ENCODE measurements at regions of chr1 and their contacts with region 1.

Region 1: GRCh38 chr1:234610348-234611152 is 572 bp upstream of the IRF2BP2 start:
- DNase-seq: peak; percentile 89 to 93 (median 91)
- ATAC-seq: peak; percentile 67
- H3K4me3 ChIP-seq: peak overlapping the region; percentile 89
- H3K4me3 Mint-ChIP-seq: peak overlapping the region; percentile 80 to 98 (median 90)
- H3K27ac ChIP-seq: peak overlapping the region; percentile 97
- H3K27ac Mint-ChIP-seq: peak overlapping the region; percentile 97 to 100 (median 99)
- H3K4me1 ChIP-seq: peaks cover 34 to 43% of the 10 kb centered on the region in 2 donors
- H3K4me1 Mint-ChIP-seq: peaks cover 45 to 62% (median 54%) of the 10 kb centered on the region in 7 donors
- H3K27me3 ChIP-seq: no peaks in the 10 kb centered on the region
- H3K27me3 Mint-ChIP-seq: peaks cover 0 to 6% (median 0%) of the 10 kb centered on the region in 5 donors

Region 2: DNA sequence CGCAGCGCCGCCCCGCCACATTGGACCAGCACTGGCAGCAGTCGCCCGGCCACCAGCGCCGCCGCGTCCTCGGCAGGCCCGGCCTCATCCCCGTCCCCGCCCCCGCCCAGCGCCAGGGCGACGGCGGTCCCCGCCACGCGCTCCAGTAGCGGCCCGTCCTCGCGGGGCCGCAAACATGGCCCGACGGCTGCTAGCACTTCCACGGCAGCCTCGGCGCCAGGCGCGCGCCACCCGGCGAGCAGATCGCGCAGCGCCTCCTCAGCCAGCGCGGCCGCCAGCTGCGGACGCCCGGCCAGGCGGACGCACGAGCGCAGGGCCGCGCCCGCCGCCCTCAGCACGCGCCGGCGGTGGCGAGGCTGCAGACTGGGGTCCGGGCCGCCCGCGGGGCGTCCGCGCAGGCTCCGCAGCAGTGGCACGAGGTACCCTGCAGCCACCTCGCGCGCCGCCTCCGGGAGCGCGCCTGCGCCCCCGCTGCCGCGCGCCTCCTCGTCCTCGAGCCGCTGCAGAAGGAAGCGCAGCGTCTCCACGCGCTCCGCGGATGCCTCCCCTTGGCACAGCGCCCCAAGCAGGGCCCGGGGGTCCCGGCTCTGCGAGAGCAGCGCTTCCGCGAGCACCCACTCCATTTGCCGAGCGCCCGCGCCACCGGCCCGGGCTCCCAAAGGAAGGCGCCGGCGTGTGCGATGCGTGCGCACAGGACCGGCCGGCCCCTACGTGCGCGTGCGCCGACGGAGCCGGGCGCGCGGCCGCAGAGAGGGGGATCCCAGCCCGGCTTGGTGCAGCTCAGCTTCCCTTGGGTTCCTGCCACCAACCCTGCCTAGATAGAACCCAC is 131.9 kb before region 1 on chr1 and contains the start of gene TARBP1:
- CTCF ChIA-PET with region 1: no interaction called
- POLR2A ChIA-PET with region 1: interaction called, 22 read pairs
- intact Hi-C with region 1: loop called (anchors 1 kb)
- DNase-seq: peak; percentile 68 to 87 (median 83)
- ATAC-seq: peak; percentile 82
- H3K4me3 ChIP-seq: peak within 1 kb of the TSS; percentile 79
- H3K4me3 Mint-ChIP-seq: peak within 1 kb of the TSS; percentile 82 to 90 (median 90)
- H3K27ac ChIP-seq: peak within 1 kb of the TSS; percentile 75
- H3K27ac Mint-ChIP-seq: peak within 1 kb of the TSS; percentile 73 to 95 (median 85)
- H3K4me1 ChIP-seq: peaks cover 0 to 16% of the 10 kb centered on the region in 2 donors
- H3K4me1 Mint-ChIP-seq: peaks cover 14 to 44% (median 39%) of the 10 kb centered on the region in 7 donors
- H3K27me3 ChIP-seq: no peaks in the 10 kb centered on the region
- H3K27me3 Mint-ChIP-seq: peaks cover 0 to 19% (median 3%) of the 10 kb centered on the region in 5 donors
- total RNA-seq, gene TARBP1: 45.8 to 49.6 (median 47.5) TPM

Region 3: GRCh38 chr1:234676103-234676594 is 65.6 kb after region 1 on chr1:
- CTCF ChIA-PET with region 1: interaction called, 4 read pairs
- POLR2A ChIA-PET with region 1: interaction called, 8 read pairs
- intact Hi-C with region 1: loop called (anchors 1 kb)
- DNase-seq: peak in 8 of 9 donors; percentile 18 to 57 (median 44)
- ATAC-seq: peak; percentile 84
- H3K4me3 ChIP-seq: peak overlapping the region; percentile 47
- H3K4me3 Mint-ChIP-seq: peak overlapping the region; percentile 52 to 89 (median 83)
- H3K27ac ChIP-seq: peak overlapping the region; percentile 37
- H3K27ac Mint-ChIP-seq: peak overlapping the region; percentile 25 to 85 (median 66)
- H3K4me1 ChIP-seq: no peaks in the 10 kb centered on the region
- H3K4me1 Mint-ChIP-seq: peaks cover 6 to 13% (median 12%) of the 10 kb centered on the region in 7 donors
- H3K27me3 ChIP-seq: no peaks in the 10 kb centered on the region
- H3K27me3 Mint-ChIP-seq: peaks cover 0 to 2% (median 0%) of the 10 kb centered on the region in 5 donors

Region 4: GRCh38 chr1:234772345-234773147 is 162.0 kb after region 1 on chr1:
- CTCF ChIA-PET with region 1: interaction called, 4 read pairs
- POLR2A ChIA-PET with region 1: interaction called, 64 read pairs
- intact Hi-C with region 1: loop called (anchors 1 kb)
- DNase-seq: peak; percentile 42 to 88 (median 64)
- ATAC-seq: peak; percentile 88
- H3K4me3 ChIP-seq: peak overlapping the region; percentile 7
- H3K4me3 Mint-ChIP-seq: peak overlapping the region; percentile 55 to 83 (median 74)
- H3K27ac ChIP-seq: peak overlapping the region; percentile 64
- H3K27ac Mint-ChIP-seq: peak overlapping the region; percentile 79 to 95 (median 90)
- H3K4me1 ChIP-seq: peaks cover 14 to 53% of the 10 kb centered on the region in 2 donors
- H3K4me1 Mint-ChIP-seq: peaks cover 39 to 69% (median 54%) of the 10 kb centered on the region in 7 donors
- H3K27me3 ChIP-seq: no peaks in the 10 kb centered on the region
- H3K27me3 Mint-ChIP-seq: no peaks in the 10 kb centered on the region

Region 5: DNA sequence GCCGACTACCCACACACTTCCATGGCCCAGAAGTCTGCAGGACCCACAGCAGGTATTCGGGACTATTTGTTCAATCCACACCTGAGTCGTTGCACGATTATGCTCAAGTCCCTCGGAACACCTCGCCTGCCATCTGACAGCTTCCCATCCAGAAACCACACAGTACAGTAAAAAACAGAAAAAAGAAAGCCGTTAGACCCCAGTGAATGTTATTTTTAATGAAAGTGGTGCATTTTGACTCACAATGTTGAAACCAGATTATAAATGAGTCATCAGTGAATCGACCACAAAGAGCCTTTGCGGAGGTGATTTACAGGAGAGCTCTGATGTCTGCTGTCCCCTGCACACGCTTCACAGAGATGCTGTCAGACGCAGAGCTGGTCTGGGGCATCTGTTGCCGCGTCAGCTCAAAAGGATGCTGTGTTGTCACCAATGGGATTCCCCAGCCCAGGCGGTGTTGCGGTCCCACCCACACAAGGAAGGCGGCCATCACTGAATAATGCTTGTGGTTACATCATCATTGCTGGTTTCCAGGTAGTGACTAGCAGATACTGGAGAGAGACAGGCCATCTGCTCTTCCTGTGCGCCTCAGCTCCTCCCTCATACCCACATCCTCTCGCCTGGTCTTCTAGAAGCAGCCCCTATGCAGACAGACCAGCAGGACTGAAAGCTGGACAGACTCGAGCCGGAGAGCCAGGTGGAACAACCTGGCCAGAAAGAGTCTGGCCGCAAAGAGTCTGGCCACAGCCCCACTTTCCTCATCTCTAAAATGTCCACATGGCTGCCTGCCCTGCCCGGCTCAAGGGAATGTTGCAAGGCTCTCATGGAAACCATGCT is 401.3 kb after region 1 on chr1:
- CTCF ChIA-PET with region 1: no interaction called
- POLR2A ChIA-PET with region 1: interaction called, 22 read pairs
- intact Hi-C with region 1: loop called (anchors 1 kb)
- DNase-seq: peak; percentile 71 to 95 (median 93)
- ATAC-seq: peak; percentile 95
- H3K4me3 ChIP-seq: peak overlapping the region; percentile 48
- H3K4me3 Mint-ChIP-seq: peak overlapping the region; percentile 72 to 84 (median 80)
- H3K27ac ChIP-seq: peak overlapping the region; percentile 91
- H3K27ac Mint-ChIP-seq: peak overlapping the region; percentile 91 to 98 (median 97)
- H3K4me1 ChIP-seq: peaks cover 27 to 34% of the 10 kb centered on the region in 2 donors
- H3K4me1 Mint-ChIP-seq: peaks cover 36 to 79% (median 67%) of the 10 kb centered on the region in 7 donors
- H3K27me3 ChIP-seq: no peaks in the 10 kb centered on the region
- H3K27me3 Mint-ChIP-seq: peaks cover 0 to 5% (median 0%) of the 10 kb centered on the region in 5 donors

Region 6: GRCh38 chr1:235642011-235642942 is 1031.7 kb after region 1 on chr1:
- CTCF ChIA-PET with region 1: no interaction called
- POLR2A ChIA-PET with region 1: no interaction called
- intact Hi-C with region 1: loop called in 1 of 2 experiments (anchors 2 kb)
- DNase-seq: peak; percentile 20 to 88 (median 40)
- ATAC-seq: peak; percentile 86
- H3K4me3 ChIP-seq: peak overlapping the region; percentile 42
- H3K4me3 Mint-ChIP-seq: peak overlapping the region; percentile 57 to 90 (median 82)
- H3K27ac ChIP-seq: no peak overlapping the region
- H3K27ac Mint-ChIP-seq: peak overlapping the region; percentile 8 to 95 (median 79)
- H3K4me1 ChIP-seq: peaks cover 4 to 26% of the 10 kb centered on the region in 2 donors
- H3K4me1 Mint-ChIP-seq: peaks cover 15 to 57% (median 19%) of the 10 kb centered on the region in 7 donors
- H3K27me3 ChIP-seq: no peaks in the 10 kb centered on the region
- H3K27me3 Mint-ChIP-seq: peaks cover 19 to 33% (median 29%) of the 10 kb centered on the region in 5 donors